ENCODE measurements at regions of chr15 and their contacts with region 1.

Region 1: DNA sequence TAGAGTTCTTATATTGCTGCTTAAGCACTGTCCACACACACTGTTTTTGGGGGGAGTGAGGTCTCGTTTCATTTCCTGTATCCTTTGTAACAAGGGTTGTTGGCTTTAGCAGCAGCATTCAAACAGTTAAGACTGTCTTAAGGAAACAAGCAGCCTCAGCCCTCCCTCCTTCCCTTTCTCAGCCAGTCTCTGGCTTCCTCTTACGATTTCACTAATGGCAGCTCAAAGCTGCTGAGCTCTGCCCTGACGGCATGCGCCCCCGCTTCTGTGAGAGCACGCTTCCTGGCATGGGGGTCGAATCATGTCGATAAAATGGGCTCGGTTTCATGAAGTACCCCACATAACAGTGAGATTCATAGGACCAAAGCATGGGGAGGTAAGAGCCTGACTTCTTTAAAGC is 105.0 kb downstream of the KLHL25 start:
- DNase-seq: peak; percentile 91
- H3K4me3 Mint-ChIP-seq: peak overlapping the region; percentile 93
- H3K27ac Mint-ChIP-seq: peak overlapping the region; percentile 99
- H3K4me1 Mint-ChIP-seq: peaks cover 65% of the 10 kb centered on the region
- H3K27me3 Mint-ChIP-seq: no peaks in the 10 kb centered on the region

Region 2: DNA sequence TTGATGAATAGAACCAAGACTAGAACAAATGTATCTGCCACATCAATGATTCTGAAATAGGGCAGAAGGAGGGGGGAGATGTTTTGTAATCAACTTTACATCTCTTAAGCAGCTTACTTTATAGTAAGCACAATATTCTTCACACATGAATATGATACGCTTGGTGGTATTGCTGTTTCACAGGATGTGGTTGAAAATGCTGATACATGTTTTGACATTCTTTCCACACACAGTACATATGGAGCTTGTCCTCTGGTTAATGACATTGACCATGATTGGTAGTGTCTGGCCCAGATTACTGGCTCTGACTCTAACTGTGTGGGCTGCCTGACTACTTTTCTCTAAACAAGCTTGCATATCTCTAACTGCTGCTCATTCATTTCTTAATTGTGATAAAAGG is 63.9 kb before region 1 on chr15:
- intact Hi-C with region 1: loop called (anchors 2 kb)
- DNase-seq: peak; percentile 76
- H3K4me3 Mint-ChIP-seq: peak overlapping the region; percentile 62
- H3K27ac Mint-ChIP-seq: peak overlapping the region; percentile 88
- H3K4me1 Mint-ChIP-seq: peaks cover 64% of the 10 kb centered on the region
- H3K27me3 Mint-ChIP-seq: no peaks in the 10 kb centered on the region

Region 3: GRCh38 chr15:85646538-85647091 is 43.1 kb before region 1 on chr15:
- intact Hi-C with region 1: loop called (anchors 1 kb)
- DNase-seq: peak; percentile 77
- H3K4me3 Mint-ChIP-seq: peak overlapping the region; percentile 52
- H3K27ac Mint-ChIP-seq: peak overlapping the region; percentile 94
- H3K4me1 Mint-ChIP-seq: peaks cover 34% of the 10 kb centered on the region
- H3K27me3 Mint-ChIP-seq: no peaks in the 10 kb centered on the region

Region 4: DNA sequence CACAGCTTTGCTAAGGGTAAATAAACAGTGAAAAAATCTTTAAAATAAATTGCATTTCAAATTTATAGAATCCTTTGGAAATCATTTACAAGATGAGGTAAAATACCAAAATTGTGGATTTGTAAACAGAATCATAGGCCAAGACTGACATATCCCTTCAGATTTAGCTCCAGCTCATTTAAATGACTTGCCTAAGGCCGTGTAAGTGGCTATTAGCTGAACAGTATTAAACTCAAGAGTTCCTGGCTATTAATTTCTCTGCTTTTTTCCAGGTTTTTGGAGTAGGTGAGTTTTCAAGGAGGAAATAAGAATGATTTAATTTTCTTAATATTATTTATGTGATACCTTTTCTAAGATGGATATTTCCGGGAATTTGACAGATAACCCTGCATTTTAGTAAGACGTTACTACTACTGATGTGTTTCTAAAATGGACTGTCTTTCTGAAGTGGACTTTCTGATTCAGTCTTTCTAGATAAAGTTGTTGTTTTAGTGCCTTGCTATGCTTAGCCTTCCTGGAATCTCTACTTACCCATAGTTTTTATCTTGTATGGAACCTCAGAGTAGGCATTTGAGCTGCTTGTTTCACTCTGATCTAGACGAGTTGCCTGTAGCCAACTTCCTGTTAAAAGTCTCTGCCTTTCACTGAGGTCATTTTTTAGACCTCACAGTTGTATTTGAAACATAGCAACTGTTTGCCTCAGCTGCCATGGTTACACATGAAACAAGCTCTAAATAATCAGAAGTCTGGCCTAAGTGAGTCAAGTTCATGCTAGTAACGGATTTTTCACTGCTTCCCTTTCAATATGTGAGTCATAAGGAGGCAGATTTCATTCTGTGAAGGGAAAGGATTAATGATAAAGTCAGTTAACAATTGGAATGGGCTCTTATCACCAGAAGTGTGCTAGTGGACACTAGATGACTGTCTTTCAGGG is 22.0 kb before region 1 on chr15:
- intact Hi-C with region 1: loop called (anchors 1 kb)
- DNase-seq: peak; percentile 89
- H3K4me3 Mint-ChIP-seq: peak overlapping the region; percentile 47
- H3K27ac Mint-ChIP-seq: peak overlapping the region; percentile 95
- H3K4me1 Mint-ChIP-seq: peaks cover 23% of the 10 kb centered on the region
- H3K27me3 Mint-ChIP-seq: no peaks in the 10 kb centered on the region

Region 5: GRCh38 chr15:85702321-85703101 is 12.8 kb after region 1 on chr15:
- intact Hi-C with region 1: loop called (anchors 1 kb)
- DNase-seq: peak; percentile 82
- H3K4me3 Mint-ChIP-seq: peak overlapping the region; percentile 76
- H3K27ac Mint-ChIP-seq: peak overlapping the region; percentile 94
- H3K4me1 Mint-ChIP-seq: peaks cover 56% of the 10 kb centered on the region
- H3K27me3 Mint-ChIP-seq: no peaks in the 10 kb centered on the region

Region 6: DNA sequence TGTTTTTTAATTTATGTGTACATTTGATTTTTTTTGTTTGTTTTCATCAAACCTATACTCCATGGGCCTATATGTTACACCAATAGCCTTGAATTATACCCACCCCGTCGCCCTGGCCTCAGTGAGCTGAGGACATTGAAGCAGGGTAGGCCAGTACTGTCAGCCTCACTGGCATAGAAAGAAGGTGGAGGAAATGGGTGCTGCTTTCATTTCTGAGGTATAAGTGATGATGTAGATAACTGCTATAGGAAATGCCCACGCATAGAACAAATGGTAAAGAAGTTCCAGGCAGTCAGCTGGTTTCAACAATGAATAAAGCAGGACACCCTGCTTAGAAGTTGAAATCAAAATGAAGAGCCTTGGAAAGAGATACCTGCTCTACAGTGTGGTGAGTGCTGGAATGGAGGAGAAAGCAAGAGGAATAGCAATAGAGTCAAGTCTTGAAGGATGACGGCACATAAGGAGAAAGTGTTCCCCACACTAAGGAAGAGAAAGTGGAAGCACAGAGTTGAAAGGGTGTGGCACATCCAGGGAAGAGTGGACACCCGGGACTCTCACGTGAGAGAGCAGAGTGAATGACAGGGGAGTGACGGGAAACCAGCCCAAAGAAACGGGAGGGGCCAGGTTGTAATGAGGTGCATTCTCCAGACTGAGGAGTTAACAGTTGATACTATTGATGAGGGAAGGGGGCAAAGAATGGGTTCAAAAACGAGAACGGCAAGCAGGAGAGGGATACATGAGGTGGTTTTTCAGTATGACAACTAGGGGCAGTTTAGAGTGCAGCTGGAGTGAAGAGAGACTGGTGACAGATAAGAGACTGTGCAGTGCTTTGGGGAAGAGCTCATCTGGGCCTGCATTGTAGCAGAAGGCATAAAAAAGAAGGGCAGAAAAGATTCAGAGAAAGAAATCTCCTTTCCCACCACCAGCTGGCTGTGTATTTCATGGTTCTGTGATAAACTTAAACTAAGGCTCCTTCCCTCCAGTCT is 34.5 kb after region 1 on chr15:
- intact Hi-C with region 1: loop called (anchors 1 kb)
- DNase-seq: peak; percentile 67
- H3K4me3 Mint-ChIP-seq: peak overlapping the region; percentile 67
- H3K27ac Mint-ChIP-seq: peak overlapping the region; percentile 90
- H3K4me1 Mint-ChIP-seq: peaks cover 30% of the 10 kb centered on the region
- H3K27me3 Mint-ChIP-seq: no peaks in the 10 kb centered on the region

Region 7: DNA sequence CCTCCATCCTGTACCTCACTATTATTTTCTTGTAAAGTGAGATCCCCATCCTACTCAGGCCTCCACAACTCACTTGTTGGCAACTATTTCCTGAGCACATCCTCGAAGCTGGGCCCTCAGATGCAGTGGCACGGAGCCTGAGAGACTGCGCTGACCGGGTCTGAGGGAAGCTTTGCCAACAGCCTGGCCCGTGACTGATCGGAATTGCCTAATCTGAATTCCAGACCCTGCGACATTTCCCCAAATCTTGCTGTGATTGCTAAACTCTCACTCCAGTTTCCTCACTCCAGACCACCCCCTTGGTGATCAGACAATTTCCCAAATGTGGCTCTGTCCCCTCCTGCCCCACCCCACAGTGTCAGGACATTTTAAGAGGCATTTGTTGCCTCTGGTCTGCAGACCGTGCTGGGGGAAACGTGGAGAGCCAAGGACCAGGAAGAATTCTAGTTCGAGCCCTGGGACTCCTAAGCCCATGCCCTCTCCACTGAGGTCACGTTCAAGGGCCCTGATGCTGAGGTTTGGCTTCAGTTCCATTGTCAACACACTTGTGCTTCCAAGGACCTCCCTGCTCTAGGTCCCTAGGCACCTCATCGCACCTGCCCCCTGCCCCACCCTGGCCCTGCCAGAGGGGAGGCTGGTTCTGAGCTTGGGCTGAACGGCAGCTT is 82.2 kb after region 1 on chr15:
- intact Hi-C with region 1: no loop called
- DNase-seq: no peak
- H3K4me3 Mint-ChIP-seq: no peak overlapping the region
- H3K27ac Mint-ChIP-seq: no peak overlapping the region
- H3K4me1 Mint-ChIP-seq: no peaks in the 10 kb centered on the region
- H3K27me3 Mint-ChIP-seq: no peaks in the 10 kb centered on the region

Measured in activated CD4-positive, alpha-beta T cell treated with anti-CD3 and anti-CD28 coated beads, Interleukin-2, amount 10 ng/mL, durations not matched to agents 24 days and 14 days (primary cell).